B cell (primary cell): ENCODE measurements at regions of chr19 and their contacts with region 1.

Region 1: DNA sequence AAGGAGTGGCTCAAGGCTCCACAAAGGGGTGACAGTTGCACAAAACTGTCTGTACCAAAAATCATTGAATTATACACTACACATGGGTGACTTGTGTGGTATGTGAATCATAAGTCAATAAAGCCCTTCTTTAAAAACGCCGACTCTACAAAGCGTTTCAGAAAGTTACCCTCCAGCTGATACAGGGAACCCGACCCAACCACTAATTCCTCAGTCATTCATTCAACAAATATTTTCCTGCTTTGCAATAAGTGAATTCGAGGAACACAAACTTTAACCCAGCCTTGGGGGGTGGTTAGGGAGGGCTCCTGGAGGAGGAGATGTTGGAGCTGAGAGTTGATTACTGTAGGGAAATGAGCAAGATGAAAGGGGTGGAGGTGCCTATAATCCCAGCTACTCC is 32.0 kb downstream of the LTBP4 start:
- DNase-seq: no peak
- ATAC-seq: no peak
- H3K4me3 ChIP-seq: no peak overlapping the region
- H3K4me3 Mint-ChIP-seq: no peak overlapping the region
- H3K27ac ChIP-seq: no peak overlapping the region
- H3K27ac Mint-ChIP-seq: no peak overlapping the region
- H3K4me1 ChIP-seq: peaks cover 0 to 5% of the 10 kb centered on the region in 2 donors
- H3K4me1 Mint-ChIP-seq: peaks cover 4% of the 10 kb centered on the region
- H3K27me3 ChIP-seq: peaks cover 0 to 13% (median 0%) of the 10 kb centered on the region in 4 experiments
- H3K27me3 Mint-ChIP-seq: peaks cover 10% of the 10 kb centered on the region
- CTCF ChIP-seq: no peak

Region 2: GRCh38 chr19:40305403-40305802 is 327.8 kb before region 1 on chr19:
- CTCF ChIA-PET with region 1: interaction called, 34 read pairs
- POLR2A ChIA-PET with region 1: no interaction called
- intact Hi-C with region 1: no loop called
- DNase-seq: peak; percentile 84
- ATAC-seq: peak; percentile 68
- H3K4me3 ChIP-seq: no peak overlapping the region
- H3K4me3 Mint-ChIP-seq: no peak overlapping the region
- H3K27ac ChIP-seq: no peak overlapping the region
- H3K27ac Mint-ChIP-seq: no peak overlapping the region
- H3K4me1 ChIP-seq: peaks cover 0 to 3% of the 10 kb centered on the region in 2 donors
- H3K4me1 Mint-ChIP-seq: peaks cover 2% of the 10 kb centered on the region
- H3K27me3 ChIP-seq: no peaks in the 10 kb centered on the region
- H3K27me3 Mint-ChIP-seq: no peaks in the 10 kb centered on the region
- CTCF ChIP-seq: peak; percentile 88

Region 3: DNA sequence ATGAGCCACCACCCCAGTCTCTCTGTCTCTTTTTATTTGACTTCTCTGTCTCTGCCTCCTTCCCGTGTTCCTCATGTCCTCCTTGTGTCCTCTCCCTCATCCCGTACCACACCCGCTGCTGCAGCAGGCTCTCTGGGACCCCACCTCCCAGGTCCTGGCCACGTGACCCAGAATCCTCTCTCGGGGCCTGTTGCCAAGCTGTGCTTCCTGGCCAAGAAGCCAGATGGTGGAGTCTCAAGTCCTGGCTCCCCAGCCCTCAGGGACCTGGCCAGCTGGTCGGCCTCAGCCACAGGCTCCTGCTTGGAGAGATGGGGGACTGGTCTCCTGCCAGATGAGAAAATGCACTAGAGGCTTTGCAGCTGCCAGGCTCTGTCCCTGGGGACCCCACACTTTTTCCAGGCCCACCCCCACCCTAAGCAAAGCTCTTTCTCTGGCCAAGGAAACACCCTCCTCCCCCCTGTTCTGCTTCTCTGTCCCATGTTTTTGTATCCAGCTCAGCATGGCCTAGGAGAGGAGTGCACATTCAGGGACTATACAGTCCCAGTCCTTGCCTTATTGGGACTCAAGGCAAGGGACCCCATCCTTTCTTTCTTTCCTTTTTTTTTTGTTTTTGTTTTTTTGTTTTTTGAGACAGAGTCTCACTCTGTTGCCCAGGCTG is 90.9 kb before region 1 on chr19:
- CTCF ChIA-PET with region 1: interaction called, 35 read pairs
- POLR2A ChIA-PET with region 1: no interaction called
- intact Hi-C with region 1: loop called (anchors 5 kb)
- DNase-seq: no peak
- ATAC-seq: no peak
- H3K4me3 ChIP-seq: no peak overlapping the region
- H3K4me3 Mint-ChIP-seq: no peak overlapping the region
- H3K27ac ChIP-seq: no peak overlapping the region
- H3K27ac Mint-ChIP-seq: no peak overlapping the region
- H3K4me1 ChIP-seq: no peaks in the 10 kb centered on the region
- H3K4me1 Mint-ChIP-seq: no peaks in the 10 kb centered on the region
- H3K27me3 ChIP-seq: peaks cover 0 to 5% (median 3%) of the 10 kb centered on the region in 4 experiments
- H3K27me3 Mint-ChIP-seq: peaks cover 14% of the 10 kb centered on the region
- CTCF ChIP-seq: no peak

Region 4: GRCh38 chr19:40570313-40571004 is 62.7 kb before region 1 on chr19:
- CTCF ChIA-PET with region 1: interaction called, 39 read pairs
- POLR2A ChIA-PET with region 1: no interaction called
- intact Hi-C with region 1: no loop called
- DNase-seq: peak; percentile 100
- ATAC-seq: peak; percentile 93
- H3K4me3 ChIP-seq: peak overlapping the region in 3 of 5 experiments; percentile 36 to 47 (median 37)
- H3K4me3 Mint-ChIP-seq: peak overlapping the region; percentile 70
- H3K27ac ChIP-seq: peak overlapping the region in 1 of 2 donors; percentile 33
- H3K27ac Mint-ChIP-seq: peak overlapping the region; percentile 83
- H3K4me1 ChIP-seq: peaks cover 24 to 27% of the 10 kb centered on the region in 2 donors
- H3K4me1 Mint-ChIP-seq: peaks cover 20% of the 10 kb centered on the region
- H3K27me3 ChIP-seq: peaks cover 0 to 32% (median 21%) of the 10 kb centered on the region in 4 experiments
- H3K27me3 Mint-ChIP-seq: peaks cover 4% of the 10 kb centered on the region
- CTCF ChIP-seq: peak; percentile 54

Region 5: GRCh38 chr19:40603389-40604135 is 29.6 kb before region 1 on chr19:
- CTCF ChIA-PET with region 1: interaction called, 84 read pairs
- POLR2A ChIA-PET with region 1: interaction called, 3 read pairs
- intact Hi-C with region 1: loop called (anchors 1 kb)
- DNase-seq: peak; percentile 97
- ATAC-seq: peak; percentile 75
- H3K4me3 ChIP-seq: peak overlapping the region in 4 of 5 experiments; percentile 27 to 66 (median 34)
- H3K4me3 Mint-ChIP-seq: peak overlapping the region; percentile 87
- H3K27ac ChIP-seq: peak overlapping the region in 1 of 2 donors; percentile 32
- H3K27ac Mint-ChIP-seq: peak overlapping the region; percentile 83
- H3K4me1 ChIP-seq: peaks cover 69 to 76% of the 10 kb centered on the region in 2 donors
- H3K4me1 Mint-ChIP-seq: peaks cover 68% of the 10 kb centered on the region
- H3K27me3 ChIP-seq: peaks cover 0 to 43% (median 26%) of the 10 kb centered on the region in 4 experiments
- H3K27me3 Mint-ChIP-seq: peaks cover 23% of the 10 kb centered on the region
- CTCF ChIP-seq: no peak

Region 6: DNA sequence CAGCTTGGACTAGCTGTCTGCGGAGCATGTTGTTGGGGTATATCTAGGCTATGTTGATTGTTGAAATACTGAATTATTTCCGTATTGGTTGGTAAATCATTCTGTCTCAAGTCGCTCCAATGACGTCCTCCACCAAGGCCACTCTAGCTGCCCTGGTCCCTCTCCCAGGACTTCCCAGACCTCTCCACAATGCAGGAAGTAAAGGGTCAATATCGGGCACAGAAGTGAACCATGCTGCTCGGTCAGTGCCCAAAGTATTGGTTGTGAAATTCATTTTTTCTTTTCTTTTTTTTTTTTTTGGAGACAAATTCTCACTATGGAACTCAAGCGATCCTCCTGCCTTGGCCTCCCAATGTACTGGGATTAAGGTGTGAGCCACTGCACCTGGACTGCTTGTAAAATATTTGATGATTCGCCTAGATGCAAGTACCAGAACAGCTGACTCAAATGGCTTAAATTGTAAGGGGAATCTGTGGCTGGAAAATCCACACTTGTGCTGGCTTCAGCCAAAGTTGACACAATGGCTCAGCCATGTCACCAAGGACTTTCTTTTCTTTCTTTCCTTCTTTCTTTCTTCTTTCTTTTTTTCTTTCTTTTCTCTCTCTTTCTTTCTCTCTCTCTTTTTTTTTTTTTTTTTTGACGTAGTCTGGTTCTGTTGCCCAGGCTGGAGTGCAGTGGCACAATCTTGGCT is 13.5 kb after region 1 on chr19:
- CTCF ChIA-PET with region 1: interaction called, 16 read pairs
- POLR2A ChIA-PET with region 1: no interaction called
- intact Hi-C with region 1: no loop called
- DNase-seq: no peak
- ATAC-seq: no peak
- H3K4me3 ChIP-seq: no peak overlapping the region
- H3K4me3 Mint-ChIP-seq: no peak overlapping the region
- H3K27ac ChIP-seq: no peak overlapping the region
- H3K27ac Mint-ChIP-seq: no peak overlapping the region
- H3K4me1 ChIP-seq: no peaks in the 10 kb centered on the region
- H3K4me1 Mint-ChIP-seq: no peaks in the 10 kb centered on the region
- H3K27me3 ChIP-seq: peaks cover 0 to 5% (median 0%) of the 10 kb centered on the region in 4 experiments
- H3K27me3 Mint-ChIP-seq: peaks cover 13% of the 10 kb centered on the region
- CTCF ChIP-seq: no peak